CD8-positive, alpha-beta T cell (primary cell): ENCODE measurements at regions of chr3 and their contacts with region 1.

Region 1: DNA sequence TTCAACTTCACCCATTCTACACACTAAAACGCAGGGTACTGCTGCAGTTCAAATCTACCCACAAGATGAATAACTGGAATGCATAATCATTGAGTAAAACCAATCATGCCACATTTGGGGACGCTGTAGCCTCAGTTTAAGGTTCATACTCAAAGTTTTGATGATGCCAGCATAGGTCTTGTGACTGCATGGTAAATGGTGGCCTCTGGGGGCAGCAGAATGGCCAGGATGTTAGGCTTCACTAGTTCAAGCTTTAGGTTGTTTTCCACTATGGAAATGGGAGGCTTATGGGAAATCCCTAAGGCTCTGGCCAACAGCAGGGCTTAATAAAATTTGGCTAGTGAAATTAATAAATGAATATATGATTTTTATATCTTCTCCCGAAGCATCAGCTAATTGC is 104.3 kb upstream of the TSC22D2 start:
- DNase-seq: peak in 2 of 9 experiments; percentile 17 to 26
- ATAC-seq: no peak
- H3K4me3 ChIP-seq: no peak overlapping the region
- H3K4me3 Mint-ChIP-seq: no peak overlapping the region
- H3K27ac ChIP-seq: no peak overlapping the region
- H3K27ac Mint-ChIP-seq: no peak overlapping the region
- H3K4me1 ChIP-seq: no peaks in the 10 kb centered on the region
- H3K4me1 Mint-ChIP-seq: no peaks in the 10 kb centered on the region
- H3K27me3 ChIP-seq: no peaks in the 10 kb centered on the region
- H3K27me3 Mint-ChIP-seq: peaks cover 39% of the 10 kb centered on the region
- CTCF ChIP-seq: peak; percentile 34

Region 2: DNA sequence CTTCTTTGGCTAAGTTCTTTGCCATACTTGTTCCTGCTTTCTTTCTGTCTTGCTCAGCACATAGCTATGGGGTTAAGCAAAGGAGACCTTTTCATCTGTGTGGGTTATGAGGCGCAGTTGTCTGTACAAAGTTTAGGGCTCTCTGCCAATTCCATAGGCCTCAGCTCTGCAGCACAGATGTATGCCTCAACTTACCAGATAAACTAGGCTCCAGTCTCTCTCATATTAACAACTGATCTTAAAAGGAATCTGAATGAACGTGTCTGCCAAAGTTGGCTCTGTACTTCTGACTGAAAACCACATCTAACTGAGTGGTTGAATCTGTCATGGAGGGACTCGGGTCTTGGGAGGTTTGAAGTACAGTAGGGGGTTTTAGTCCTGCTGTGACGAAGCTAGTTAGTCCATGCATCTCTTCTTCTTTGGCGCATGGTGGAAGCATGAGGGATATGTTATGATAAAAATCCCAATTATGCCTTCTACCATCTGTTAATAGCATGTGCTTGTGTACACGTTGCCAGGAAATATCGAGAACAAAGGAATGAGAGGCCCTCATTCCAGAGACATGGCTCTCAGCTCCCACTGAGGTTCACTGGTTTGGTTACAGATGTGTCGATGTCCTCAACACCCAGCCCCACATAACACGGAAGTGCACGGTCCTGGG is 10.2 kb before region 1 on chr3:
- CTCF ChIA-PET with region 1: interaction called, 12 read pairs
- POLR2A ChIA-PET with region 1: no interaction called
- intact Hi-C with region 1: no loop called
- DNase-seq: no peak
- ATAC-seq: no peak
- H3K4me3 ChIP-seq: no peak overlapping the region
- H3K4me3 Mint-ChIP-seq: no peak overlapping the region
- H3K27ac ChIP-seq: no peak overlapping the region
- H3K27ac Mint-ChIP-seq: no peak overlapping the region
- H3K4me1 ChIP-seq: no peaks in the 10 kb centered on the region
- H3K4me1 Mint-ChIP-seq: no peaks in the 10 kb centered on the region
- H3K27me3 ChIP-seq: peaks cover 0 to 3% of the 10 kb centered on the region in 2 experiments
- H3K27me3 Mint-ChIP-seq: peaks cover 22% of the 10 kb centered on the region
- CTCF ChIP-seq: no peak